ENCODE measurements at regions of chr2 and their contacts with region 1.

Region 1: GRCh38 chr2:65432227-65433190 is at the start of gene SPRED2:
- DNase-seq: peak; percentile 94
- ATAC-seq: peak; percentile 64
- H3K4me3 ChIP-seq: peak within 1 kb of the TSS; percentile 82 to 92
- H3K27ac ChIP-seq: peak within 1 kb of the TSS; percentile 81
- H3K4me1 ChIP-seq: peaks cover 40% of the 10 kb centered on the region
- H3K27me3 ChIP-seq: no peaks in the 10 kb centered on the region
- CTCF ChIP-seq: peak; percentile 16; the same call in 1 of the 2 replicates
- total RNA-seq, gene SPRED2: 60.1 TPM

Region 2: DNA sequence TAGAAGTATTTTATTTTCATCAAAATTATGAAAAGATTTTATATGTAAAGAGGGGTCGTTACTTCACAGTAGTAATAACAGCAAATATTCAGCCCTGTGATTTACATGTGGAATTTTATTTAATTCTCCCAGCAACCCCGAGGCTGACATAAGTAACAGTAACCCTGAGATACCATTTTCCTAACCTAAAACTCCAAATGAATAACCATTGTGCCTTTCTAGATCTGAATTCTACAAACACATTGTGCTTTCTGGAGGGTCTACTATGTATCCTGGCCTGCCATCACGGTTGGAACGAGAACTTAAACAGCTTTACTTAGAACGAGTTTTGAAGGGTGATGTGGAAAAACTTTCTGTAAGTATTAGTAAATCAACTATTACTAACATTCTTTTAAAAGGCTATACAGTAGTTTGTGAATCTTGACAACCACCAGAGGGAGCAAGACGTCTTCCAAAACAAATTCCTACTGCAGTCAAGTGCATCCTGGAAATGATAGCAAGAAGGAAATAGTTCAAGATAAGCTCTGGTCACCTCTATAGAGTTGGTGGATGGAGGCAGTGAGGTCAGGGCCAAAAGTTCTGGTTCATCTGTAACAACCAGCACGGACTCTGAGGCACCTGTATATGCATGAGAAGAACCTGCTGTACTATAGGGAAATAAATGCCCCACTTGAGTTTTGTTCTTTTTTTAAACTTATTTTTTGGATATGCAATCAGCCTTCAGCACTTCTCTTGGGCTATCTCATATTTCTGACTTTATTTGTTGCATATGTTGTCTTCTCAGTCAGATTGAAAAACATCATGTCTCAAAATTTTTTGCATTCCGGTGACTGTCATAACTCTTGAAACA is 167.5 kb before region 1 on chr2:
- CTCF ChIA-PET with region 1: no interaction called
- POLR2A ChIA-PET with region 1: no interaction called
- in situ Hi-C with region 1: no loop called
- intact Hi-C with region 1: loop called (anchors 2 kb)
- DNase-seq: peak; percentile 54
- ATAC-seq: peak; percentile 70
- H3K4me3 ChIP-seq: no peak overlapping the region
- H3K27ac ChIP-seq: no peak overlapping the region
- H3K4me1 ChIP-seq: peaks cover 17% of the 10 kb centered on the region
- H3K27me3 ChIP-seq: no peaks in the 10 kb centered on the region
- CTCF ChIP-seq: peak; percentile 74

Region 3: GRCh38 chr2:65366595-65367125 is 65.8 kb before region 1 on chr2:
- CTCF ChIA-PET with region 1: no interaction called
- POLR2A ChIA-PET with region 1: interaction called, 3 read pairs
- in situ Hi-C with region 1: no loop called
- intact Hi-C with region 1: loop called (anchors 5 kb)
- DNase-seq: peak; percentile 97
- ATAC-seq: peak; percentile 91
- H3K4me3 ChIP-seq: peak overlapping the region; percentile 36 to 50
- H3K27ac ChIP-seq: peak overlapping the region; percentile 88
- H3K4me1 ChIP-seq: peaks cover 93% of the 10 kb centered on the region
- H3K27me3 ChIP-seq: no peaks in the 10 kb centered on the region
- CTCF ChIP-seq: no peak

Region 4: DNA sequence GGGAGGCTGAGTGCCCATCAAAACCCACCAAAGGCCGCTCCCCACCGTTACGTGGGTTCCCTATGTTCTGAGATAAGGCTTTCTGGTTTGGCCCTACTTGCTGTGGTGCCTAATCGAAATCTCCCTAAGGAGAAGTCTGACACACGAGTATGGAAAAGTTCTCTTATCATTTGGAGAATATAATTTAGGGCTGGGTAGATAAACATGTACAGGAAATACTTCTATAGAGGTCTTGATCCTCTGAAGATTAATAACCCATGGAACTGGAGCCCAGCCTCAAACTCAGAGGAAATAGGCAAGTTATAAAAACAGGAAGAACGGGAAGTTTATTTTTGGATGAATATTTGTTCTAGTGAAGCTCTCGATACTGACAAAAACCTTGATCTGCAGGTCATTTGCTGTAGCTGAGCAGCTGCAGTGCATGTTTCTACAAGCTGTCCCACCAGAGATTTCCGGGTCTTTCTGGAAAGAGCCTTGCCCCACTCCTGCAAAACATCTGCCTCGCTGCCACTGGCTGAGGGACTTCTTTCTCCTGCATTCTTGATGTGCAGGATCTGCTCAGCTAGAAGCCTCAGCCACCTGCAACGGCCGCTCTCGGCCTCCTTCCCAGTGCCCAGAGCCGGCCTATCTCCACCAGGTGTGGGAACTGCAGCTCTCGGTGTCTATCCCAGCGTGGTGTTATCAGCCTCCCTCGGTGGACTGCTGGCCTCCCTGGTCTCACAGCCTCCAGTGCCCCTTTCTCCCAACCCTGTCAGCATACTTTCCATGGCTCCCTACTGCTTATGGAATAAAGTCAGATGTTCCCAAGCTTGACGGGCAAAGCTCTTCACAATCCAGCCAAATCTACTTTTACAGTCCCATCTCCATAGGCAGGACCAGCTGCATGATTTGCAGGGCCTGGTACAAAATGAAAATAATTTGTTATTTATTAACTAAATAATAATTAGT is 48.7 kb before region 1 on chr2:
- CTCF ChIA-PET with region 1: no interaction called
- POLR2A ChIA-PET with region 1: interaction called, 4 read pairs
- in situ Hi-C with region 1: no loop called
- intact Hi-C with region 1: loop called (anchors 2 kb)
- DNase-seq: no peak
- ATAC-seq: peak; percentile 20; the same call in 1 of the 2 replicates
- H3K4me3 ChIP-seq: peak overlapping the region in 1 of 2 experiments; percentile 31; a peak in 2 of 4 replicates
- H3K27ac ChIP-seq: peak overlapping the region; percentile 75
- H3K4me1 ChIP-seq: peaks cover 83% of the 10 kb centered on the region
- H3K27me3 ChIP-seq: no peaks in the 10 kb centered on the region
- CTCF ChIP-seq: no peak

Region 5: GRCh38 chr2:65554765-65555591 is 122.5 kb after region 1 on chr2:
- CTCF ChIA-PET with region 1: no interaction called
- POLR2A ChIA-PET with region 1: interaction called, 12 read pairs
- in situ Hi-C with region 1: no loop called
- intact Hi-C with region 1: loop called (anchors 5 kb)
- DNase-seq: no peak
- ATAC-seq: no peak
- H3K4me3 ChIP-seq: no peak overlapping the region
- H3K27ac ChIP-seq: no peak overlapping the region
- H3K4me1 ChIP-seq: no peaks in the 10 kb centered on the region; the same call in 1 of the 2 replicates
- H3K27me3 ChIP-seq: no peaks in the 10 kb centered on the region
- CTCF ChIP-seq: no peak

Measured in Panc1 (cell line).